A549 (cell line): ENCODE measurements at regions of chr6 and their contacts with region 1.

Region 1: GRCh38 chr6:31441365-31442267 is 38.2 kb downstream of the MICA start:
- DNase-seq: peak; percentile 50 to 77
- ATAC-seq: peak; percentile 96 to 99
- H3K4me3 ChIP-seq: no peak overlapping the region
- H3K27ac ChIP-seq: no peak overlapping the region
- H3K4me1 ChIP-seq: no peaks in the 10 kb centered on the region
- CTCF ChIP-seq: peak; percentile 68
- EP300 ChIP-seq: no peak
- POLR2A ChIP-seq: no peak
- RAD21 ChIP-seq: peak; percentile 71 to 75

Region 2: DNA sequence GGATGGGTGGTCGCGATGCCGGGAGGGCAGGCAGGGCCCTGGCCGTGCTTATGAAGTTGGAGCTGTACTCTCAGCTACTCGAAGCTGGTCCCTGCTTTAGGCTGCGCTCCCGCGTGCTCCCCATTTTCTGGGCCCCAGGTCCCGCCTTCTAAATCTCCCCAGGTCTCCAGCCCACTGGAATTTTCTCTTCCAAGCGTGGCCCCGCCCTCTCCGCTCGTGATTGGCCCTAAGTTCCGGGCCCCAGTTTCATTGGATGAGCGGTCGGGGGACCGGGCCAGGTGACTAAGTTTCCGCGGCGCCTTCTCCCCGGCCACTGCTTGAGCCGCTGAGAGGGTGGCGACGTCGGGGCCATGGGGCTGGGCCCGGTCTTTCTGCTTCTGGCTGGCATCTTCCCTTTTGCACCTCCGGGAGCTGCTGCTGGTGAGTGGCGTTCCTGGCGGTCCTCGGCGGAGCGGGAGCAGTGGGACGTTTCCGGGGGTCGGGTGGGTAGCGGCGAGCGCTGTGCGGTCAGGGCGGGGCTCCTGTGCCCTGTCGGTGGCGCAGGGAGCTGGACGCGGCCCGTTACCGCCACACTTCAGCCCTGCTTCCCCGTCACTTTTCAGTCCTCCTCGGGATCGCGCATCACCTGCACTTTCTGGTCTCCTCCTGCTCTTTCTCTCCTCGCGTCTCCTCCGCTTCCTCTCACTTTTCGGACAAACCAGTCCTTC is 38.2 kb before region 1 on chr6 and contains the start of gene MICA:
- CTCF ChIA-PET with region 1: interaction called, 108 read pairs
- POLR2A ChIA-PET with region 1: interaction called, 3 read pairs
- DNase-seq: peak; percentile 85 to 93
- ATAC-seq: peak; percentile 83 to 86
- H3K4me3 ChIP-seq: peak within 1 kb of the TSS; percentile 72
- H3K27ac ChIP-seq: peak within 1 kb of the TSS; percentile 75 to 91
- H3K4me1 ChIP-seq: peaks cover 42% of the 10 kb centered on the region
- CTCF ChIP-seq: no peak
- EP300 ChIP-seq: no peak
- POLR2A ChIP-seq: peak; percentile 74
- RAD21 ChIP-seq: no peak
- polyA plus RNA-seq, gene MICA: 20.5 and 22.7 TPM in 2 replicates

Region 3: DNA sequence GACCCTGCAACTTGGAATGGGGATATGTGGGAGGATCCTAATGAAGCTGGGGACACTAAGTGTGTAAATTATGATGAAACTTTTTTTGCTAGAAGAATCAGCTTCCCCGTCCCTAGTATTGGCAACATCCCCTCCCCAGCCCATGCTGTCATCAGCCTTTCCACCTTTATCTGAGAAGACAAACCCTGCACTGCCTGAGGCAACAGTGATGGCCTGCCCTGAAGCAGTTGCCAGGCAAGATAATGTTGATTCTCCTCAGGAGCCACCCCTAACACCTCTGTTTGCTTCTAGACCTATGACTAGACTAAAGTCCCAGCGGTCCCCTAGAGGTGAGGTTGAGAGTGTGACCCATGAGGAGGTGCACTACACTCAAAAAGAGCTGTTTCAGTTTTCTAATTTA is 11.2 kb before region 1 on chr6:
- CTCF ChIA-PET with region 1: interaction called, 19 read pairs
- POLR2A ChIA-PET with region 1: no interaction called
- DNase-seq: no peak
- ATAC-seq: no peak
- H3K4me3 ChIP-seq: no peak overlapping the region
- H3K27ac ChIP-seq: no peak overlapping the region
- H3K4me1 ChIP-seq: no peaks in the 10 kb centered on the region
- CTCF ChIP-seq: no peak
- EP300 ChIP-seq: no peak
- POLR2A ChIP-seq: no peak
- RAD21 ChIP-seq: no peak

Region 4: DNA sequence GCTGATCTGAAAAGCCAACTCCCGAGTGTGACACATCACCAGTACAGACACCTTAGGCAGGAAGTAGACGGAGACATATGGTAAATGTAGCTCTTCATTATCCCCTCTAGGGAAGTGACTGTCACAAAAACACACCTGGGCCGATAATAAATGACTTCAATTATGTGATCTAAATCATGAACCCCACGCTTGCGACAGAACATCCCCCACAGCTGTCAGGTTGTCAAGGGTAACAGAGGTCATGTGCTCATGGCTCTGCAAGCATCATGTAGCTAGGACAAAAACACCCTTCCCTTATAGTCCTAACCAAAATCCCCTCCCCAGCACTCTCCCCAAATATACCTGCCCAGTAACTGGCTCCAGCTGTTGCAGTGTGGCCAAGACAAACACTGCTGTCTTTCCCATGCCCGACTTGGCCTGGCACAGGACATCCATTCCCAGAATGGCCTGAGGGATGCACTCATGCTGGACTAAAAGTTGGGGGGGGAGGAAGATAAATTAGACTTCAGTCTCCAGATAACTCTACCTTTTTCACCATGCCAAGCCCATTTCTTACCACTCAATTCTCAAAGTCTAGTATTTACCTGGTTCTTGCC is 97.3 kb after region 1 on chr6:
- CTCF ChIA-PET with region 1: no interaction called
- POLR2A ChIA-PET with region 1: no interaction called
- DNase-seq: no peak
- ATAC-seq: no peak
- H3K4me3 ChIP-seq: no peak overlapping the region; the same call in 2 of the 3 replicates
- H3K27ac ChIP-seq: no peak overlapping the region
- H3K4me1 ChIP-seq: peaks cover 28% of the 10 kb centered on the region
- CTCF ChIP-seq: no peak
- EP300 ChIP-seq: no peak
- POLR2A ChIP-seq: no peak
- RAD21 ChIP-seq: no peak